ENCODE measurements at regions of chr5 and their contacts with region 1.

Region 1: DNA sequence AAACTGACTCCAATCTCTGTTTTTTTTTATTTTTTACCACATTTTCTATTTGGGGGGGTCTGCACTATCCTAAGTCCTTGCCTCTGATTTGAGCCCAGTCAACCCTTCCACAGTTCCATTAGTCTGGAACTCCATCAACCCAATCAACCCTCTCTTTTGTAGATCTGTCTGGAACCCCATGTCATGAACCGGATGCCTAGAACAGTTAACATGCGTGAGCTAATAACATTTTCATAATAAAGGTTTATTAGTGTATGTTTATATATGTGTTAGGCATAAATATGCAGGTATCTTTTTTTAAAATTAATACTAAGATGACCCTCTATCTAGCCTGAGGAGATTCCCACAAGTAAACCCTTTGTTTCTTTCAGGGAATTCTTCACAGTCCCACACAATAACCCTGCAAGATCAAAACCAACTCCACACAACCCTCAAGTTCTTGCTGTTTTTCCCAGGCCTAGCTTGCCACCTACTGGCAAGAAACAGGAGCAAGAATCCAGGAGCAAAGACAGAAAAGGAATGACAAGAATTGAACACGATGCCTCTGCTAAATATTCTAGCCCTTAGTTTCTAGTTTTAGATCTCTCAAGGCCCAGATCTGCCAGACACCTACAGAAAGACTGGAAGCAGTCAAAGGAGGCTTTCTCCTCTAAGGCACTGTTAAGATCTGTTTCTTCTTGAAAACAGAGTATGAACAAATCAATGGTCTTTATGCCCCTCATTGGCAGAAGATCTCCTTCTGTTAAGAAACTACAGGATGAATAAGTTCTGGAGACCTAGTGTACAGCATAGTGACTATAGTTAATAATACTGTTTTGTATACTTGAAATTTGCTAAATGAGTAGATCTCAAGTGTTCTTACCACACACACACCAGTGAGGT is 100.4 kb downstream of the TRIM36 start:
- DNase-seq: peak; percentile 58
- ATAC-seq: peak; percentile 90
- H3K4me3 ChIP-seq: no peak overlapping the region
- H3K27ac ChIP-seq: no peak overlapping the region
- H3K4me1 ChIP-seq: no peaks in the 10 kb centered on the region
- H3K27me3 ChIP-seq: no peaks in the 10 kb centered on the region
- CTCF ChIP-seq: peak; percentile 62
- POLR2A ChIP-seq: no peak
- RAD21 ChIP-seq: peak; percentile 70

Region 2: GRCh38 chr5:113612060-113612496 is 1457.2 kb before region 1 on chr5:
- CTCF ChIA-PET with region 1: interaction called, 6 read pairs
- POLR2A ChIA-PET with region 1: no interaction called
- dilution Hi-C with region 1: no loop called
- in situ Hi-C with region 1: no loop called
- intact Hi-C with region 1: loop called (anchors 1 kb)
- DNase-seq: peak; percentile 51
- ATAC-seq: peak; percentile 61
- H3K4me3 ChIP-seq: no peak overlapping the region
- H3K27ac ChIP-seq: no peak overlapping the region
- H3K4me1 ChIP-seq: peaks cover 9% of the 10 kb centered on the region
- H3K27me3 ChIP-seq: no peaks in the 10 kb centered on the region
- CTCF ChIP-seq: peak; percentile 67
- POLR2A ChIP-seq: no peak
- RAD21 ChIP-seq: peak; percentile 69

Region 3: GRCh38 chr5:113632996-113633395 is 1436.3 kb before region 1 on chr5:
- CTCF ChIA-PET with region 1: no interaction called
- POLR2A ChIA-PET with region 1: no interaction called
- dilution Hi-C with region 1: no loop called
- in situ Hi-C with region 1: loop called (anchors 25 kb)
- intact Hi-C with region 1: no loop called
- DNase-seq: no peak
- ATAC-seq: no peak
- H3K4me3 ChIP-seq: no peak overlapping the region
- H3K27ac ChIP-seq: no peak overlapping the region
- H3K4me1 ChIP-seq: no peaks in the 10 kb centered on the region
- H3K27me3 ChIP-seq: no peaks in the 10 kb centered on the region; the same call in 1 of the 2 replicates
- CTCF ChIP-seq: no peak
- POLR2A ChIP-seq: no peak
- RAD21 ChIP-seq: no peak

Region 4: DNA sequence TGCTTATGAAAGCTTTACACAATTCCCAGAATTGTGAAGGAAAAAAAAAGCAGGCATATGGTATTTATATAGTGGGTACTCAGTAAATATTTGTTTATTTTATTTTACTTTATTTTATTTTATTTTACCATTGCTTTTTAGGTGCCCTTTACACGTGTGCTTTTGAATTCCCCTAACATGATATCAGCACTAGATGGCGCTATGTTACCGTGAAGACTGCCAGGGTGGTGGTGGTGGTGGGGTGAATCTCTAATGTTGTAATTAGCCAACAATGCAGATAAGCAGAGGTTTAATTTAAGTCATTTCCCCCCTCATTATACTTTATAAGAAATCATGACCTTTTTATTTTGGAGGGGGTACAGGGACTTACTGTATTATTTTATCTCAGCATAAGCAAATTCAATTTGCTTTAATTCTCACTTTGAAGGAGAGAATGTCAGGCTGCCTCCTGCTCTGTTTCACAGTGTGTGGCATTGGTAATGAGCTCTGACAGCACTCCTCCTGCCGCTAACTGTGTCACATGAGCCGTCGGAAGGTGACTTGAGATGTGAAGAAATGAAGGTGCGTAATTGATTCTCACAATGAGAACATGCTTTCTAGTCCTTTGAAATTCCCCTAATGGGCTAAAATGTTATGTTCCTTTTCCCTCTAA is 1390.3 kb before region 1 on chr5:
- CTCF ChIA-PET with region 1: no interaction called
- POLR2A ChIA-PET with region 1: no interaction called
- dilution Hi-C with region 1: no loop called
- in situ Hi-C with region 1: no loop called
- intact Hi-C with region 1: loop called (anchors 1 kb)
- DNase-seq: peak; percentile 36
- ATAC-seq: peak; percentile 84
- H3K4me3 ChIP-seq: no peak overlapping the region
- H3K27ac ChIP-seq: no peak overlapping the region
- H3K4me1 ChIP-seq: no peaks in the 10 kb centered on the region
- H3K27me3 ChIP-seq: no peaks in the 10 kb centered on the region; the same call in 1 of the 2 replicates
- CTCF ChIP-seq: peak; percentile 84
- POLR2A ChIP-seq: no peak
- RAD21 ChIP-seq: peak; percentile 85

Region 5: GRCh38 chr5:114101153-114101552 is 968.2 kb before region 1 on chr5:
- CTCF ChIA-PET with region 1: no interaction called
- POLR2A ChIA-PET with region 1: no interaction called
- dilution Hi-C with region 1: no loop called
- in situ Hi-C with region 1: no loop called
- intact Hi-C with region 1: loop called (anchors 10 kb)
- DNase-seq: peak; percentile 80
- ATAC-seq: peak; percentile 91
- H3K4me3 ChIP-seq: no peak overlapping the region
- H3K27ac ChIP-seq: no peak overlapping the region
- H3K4me1 ChIP-seq: no peaks in the 10 kb centered on the region
- H3K27me3 ChIP-seq: no peaks in the 10 kb centered on the region
- CTCF ChIP-seq: peak; percentile 82
- POLR2A ChIP-seq: no peak
- RAD21 ChIP-seq: peak; percentile 85

Region 6: GRCh38 chr5:114113604-114114003 is 955.7 kb before region 1 on chr5:
- CTCF ChIA-PET with region 1: interaction called, 11 read pairs
- POLR2A ChIA-PET with region 1: no interaction called
- dilution Hi-C with region 1: no loop called
- in situ Hi-C with region 1: no loop called
- intact Hi-C with region 1: loop called (anchors 10 kb)
- DNase-seq: no peak
- ATAC-seq: no peak
- H3K4me3 ChIP-seq: no peak overlapping the region
- H3K27ac ChIP-seq: no peak overlapping the region
- H3K4me1 ChIP-seq: no peaks in the 10 kb centered on the region
- H3K27me3 ChIP-seq: no peaks in the 10 kb centered on the region
- CTCF ChIP-seq: no peak
- POLR2A ChIP-seq: no peak
- RAD21 ChIP-seq: no peak

Region 7: DNA sequence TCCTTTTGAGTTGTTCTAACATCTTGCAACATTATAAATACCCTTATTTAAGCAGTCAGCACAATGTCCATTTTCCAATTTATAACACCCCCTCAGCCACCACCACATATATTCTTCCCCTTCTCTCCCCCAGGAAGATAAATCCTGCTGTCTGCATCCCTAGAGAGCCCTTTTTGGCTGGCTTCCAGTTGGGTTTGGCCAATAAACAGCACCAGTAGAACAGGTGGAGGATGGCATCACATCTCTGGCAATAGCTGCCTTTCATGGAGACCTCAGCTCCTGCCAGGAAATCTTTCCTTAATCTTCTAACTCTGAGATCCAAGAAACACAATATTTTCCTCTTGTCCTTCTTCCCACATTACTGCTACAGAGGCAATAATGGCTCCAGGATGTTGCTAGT is 46.7 kb after region 1 on chr5:
- CTCF ChIA-PET with region 1: no interaction called
- POLR2A ChIA-PET with region 1: no interaction called
- dilution Hi-C with region 1: no loop called
- in situ Hi-C with region 1: no loop called
- intact Hi-C with region 1: no loop called
- DNase-seq: no peak
- ATAC-seq: no peak
- H3K4me3 ChIP-seq: no peak overlapping the region
- H3K27ac ChIP-seq: no peak overlapping the region
- H3K4me1 ChIP-seq: no peaks in the 10 kb centered on the region
- H3K27me3 ChIP-seq: no peaks in the 10 kb centered on the region
- CTCF ChIP-seq: no peak
- POLR2A ChIP-seq: no peak
- RAD21 ChIP-seq: no peak

Region 8: DNA sequence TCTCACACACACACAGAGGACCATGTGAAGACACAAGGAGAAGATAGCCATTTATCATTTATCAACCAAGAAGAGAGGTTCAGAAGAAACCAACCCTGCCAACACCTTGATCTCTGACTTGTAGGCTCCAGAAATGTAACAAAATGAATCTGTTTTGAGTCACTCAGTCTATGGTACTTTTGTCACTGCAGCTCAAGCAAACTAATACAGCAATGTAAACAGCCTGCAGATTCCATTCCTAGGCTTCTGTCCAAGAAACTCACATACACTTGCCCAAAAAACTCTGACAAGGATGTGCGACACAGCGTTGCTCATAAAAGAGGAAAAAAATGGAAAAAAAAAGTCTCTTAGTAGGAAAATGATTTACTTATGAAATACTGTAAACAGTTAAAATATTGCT is 67.0 kb after region 1 on chr5:
- CTCF ChIA-PET with region 1: no interaction called
- POLR2A ChIA-PET with region 1: no interaction called
- dilution Hi-C with region 1: no loop called
- in situ Hi-C with region 1: no loop called
- intact Hi-C with region 1: no loop called
- DNase-seq: no peak
- ATAC-seq: no peak
- H3K4me3 ChIP-seq: no peak overlapping the region
- H3K27ac ChIP-seq: no peak overlapping the region
- H3K4me1 ChIP-seq: no peaks in the 10 kb centered on the region
- H3K27me3 ChIP-seq: no peaks in the 10 kb centered on the region
- CTCF ChIP-seq: no peak
- POLR2A ChIP-seq: no peak
- RAD21 ChIP-seq: no peak

Measured in IMR-90 (cell line).